ENCODE measurements at regions of chr19 and their contacts with region 1.

Region 1: GRCh38 chr19:47210689-47211316 is 20.2 kb downstream of the BBC3 start:
- DNase-seq: peak; percentile 71 to 79
- ATAC-seq: peak; percentile 81 to 91 (median 88)
- H3K4me3 ChIP-seq: no peak overlapping the region
- H3K27ac ChIP-seq: peak overlapping the region; percentile 3
- H3K4me1 ChIP-seq: no peaks in the 10 kb centered on the region
- H3K27me3 ChIP-seq: no peaks in the 10 kb centered on the region
- CTCF ChIP-seq: peak; percentile 83

Region 2: GRCh38 chr19:47145639-47146486 is 64.9 kb before region 1 on chr19:
- intact Hi-C with region 1: loop called (anchors 5 kb)
- DNase-seq: no peak
- ATAC-seq: no peak
- H3K4me3 ChIP-seq: no peak overlapping the region
- H3K27ac ChIP-seq: no peak overlapping the region
- H3K4me1 ChIP-seq: peaks cover 19% of the 10 kb centered on the region
- H3K27me3 ChIP-seq: no peaks in the 10 kb centered on the region
- CTCF ChIP-seq: no peak

Measured in psoas muscle (tissue), 8 donors.